MCF 10A (cell line): ENCODE measurements at regions of chr1 and their contacts with region 1.

Region 1: GRCh38 chr1:240619906-240620621 is 8.1 kb upstream of the GREM2 start:
- DNase-seq: no peak
- H3K4me3 Mint-ChIP-seq: no peak overlapping the region
- H3K27ac Mint-ChIP-seq: no peak overlapping the region
- H3K4me1 Mint-ChIP-seq: peaks cover 15% of the 10 kb centered on the region
- H3K27me3 Mint-ChIP-seq: no peaks in the 10 kb centered on the region
- CTCF ChIP-seq: no peak

Region 2: GRCh38 chr1:240602189-240602588 is 17.9 kb before region 1 on chr1:
- CTCF ChIA-PET with region 1: interaction called, 11 read pairs
- POLR2A ChIA-PET with region 1: interaction called, 3 read pairs
- intact Hi-C with region 1: no loop called
- DNase-seq: no peak
- H3K4me3 Mint-ChIP-seq: no peak overlapping the region
- H3K27ac Mint-ChIP-seq: no peak overlapping the region
- H3K4me1 Mint-ChIP-seq: no peaks in the 10 kb centered on the region
- H3K27me3 Mint-ChIP-seq: no peaks in the 10 kb centered on the region
- CTCF ChIP-seq: peak; percentile 49

Region 3: GRCh38 chr1:240672132-240672811 is 52.2 kb after region 1 on chr1:
- CTCF ChIA-PET with region 1: no interaction called
- POLR2A ChIA-PET with region 1: no interaction called
- intact Hi-C with region 1: loop called (anchors 5 kb)
- DNase-seq: no peak
- H3K4me3 Mint-ChIP-seq: no peak overlapping the region
- H3K27ac Mint-ChIP-seq: no peak overlapping the region
- H3K4me1 Mint-ChIP-seq: no peaks in the 10 kb centered on the region
- H3K27me3 Mint-ChIP-seq: no peaks in the 10 kb centered on the region
- CTCF ChIP-seq: no peak